ENCODE measurements at regions of chr5 and their contacts with region 1.

Region 1: GRCh38 chr5:31809050-31809870 is 170.3 kb downstream of the PDZD2 start:
- DNase-seq: peak; percentile 56
- ATAC-seq: peak; percentile 99
- H3K4me3 ChIP-seq: peak overlapping the region in 1 of 2 experiments; percentile 9; a peak in 1 of 4 replicates
- H3K27ac ChIP-seq: no peak overlapping the region
- H3K4me1 ChIP-seq: no peaks in the 10 kb centered on the region
- H3K27me3 ChIP-seq: peaks cover 27% of the 10 kb centered on the region
- CTCF ChIP-seq: peak; percentile 86

Region 2: DNA sequence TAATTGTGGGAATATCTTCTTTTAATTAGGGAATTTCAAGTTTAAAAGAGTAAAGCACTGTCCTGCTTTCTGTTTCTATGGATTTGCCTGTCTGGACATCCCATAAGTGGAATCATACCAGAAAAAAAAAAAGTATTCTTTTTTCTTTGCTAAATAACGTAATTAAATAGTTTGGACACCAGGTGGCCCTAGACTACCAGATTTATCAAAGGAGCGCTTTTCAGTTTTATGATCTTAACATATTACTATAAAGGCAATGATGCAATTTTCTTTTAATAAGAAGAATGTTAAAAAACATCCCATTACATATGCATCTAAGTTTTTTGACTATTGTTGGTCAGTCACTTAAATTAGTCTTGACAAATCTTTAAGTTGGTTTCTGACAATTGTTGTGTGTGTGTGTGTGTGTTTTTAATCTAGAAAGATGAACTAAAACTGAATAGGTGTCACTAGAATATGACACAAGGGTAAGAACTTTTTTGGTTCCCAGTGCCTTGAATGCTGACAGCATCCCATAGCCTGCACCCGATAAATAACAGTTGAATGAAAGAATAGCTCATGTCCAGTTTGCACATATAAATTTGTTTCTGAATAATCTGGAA is 227.7 kb before region 1 on chr5:
- CTCF ChIA-PET with region 1: interaction called, 7 read pairs
- POLR2A ChIA-PET with region 1: no interaction called
- in situ Hi-C with region 1: no loop called
- intact Hi-C with region 1: loop called (anchors 1 kb)
- DNase-seq: peak; percentile 10
- ATAC-seq: no peak
- H3K4me3 ChIP-seq: no peak overlapping the region
- H3K27ac ChIP-seq: no peak overlapping the region
- H3K4me1 ChIP-seq: no peaks in the 10 kb centered on the region
- H3K27me3 ChIP-seq: peaks cover 27% of the 10 kb centered on the region
- CTCF ChIP-seq: peak; percentile 59; the same call in 1 of the 2 replicates

Region 3: GRCh38 chr5:31626156-31626555 is 183.1 kb before region 1 on chr5:
- CTCF ChIA-PET with region 1: no interaction called
- POLR2A ChIA-PET with region 1: no interaction called
- in situ Hi-C with region 1: no loop called
- intact Hi-C with region 1: no loop called
- DNase-seq: no peak
- ATAC-seq: no peak
- H3K4me3 ChIP-seq: no peak overlapping the region
- H3K27ac ChIP-seq: no peak overlapping the region
- H3K4me1 ChIP-seq: no peaks in the 10 kb centered on the region
- H3K27me3 ChIP-seq: peaks cover 5% of the 10 kb centered on the region
- CTCF ChIP-seq: no peak

Region 4: GRCh38 chr5:31889001-31889561 is 79.8 kb after region 1 on chr5:
- CTCF ChIA-PET with region 1: no interaction called
- POLR2A ChIA-PET with region 1: no interaction called
- in situ Hi-C with region 1: no loop called
- intact Hi-C with region 1: no loop called
- DNase-seq: no peak
- ATAC-seq: no peak
- H3K4me3 ChIP-seq: no peak overlapping the region
- H3K27ac ChIP-seq: no peak overlapping the region
- H3K4me1 ChIP-seq: no peaks in the 10 kb centered on the region
- H3K27me3 ChIP-seq: peaks cover 3% of the 10 kb centered on the region
- CTCF ChIP-seq: no peak